ENCODE measurements at regions of chr10 and their contacts with region 1.

Region 1: DNA sequence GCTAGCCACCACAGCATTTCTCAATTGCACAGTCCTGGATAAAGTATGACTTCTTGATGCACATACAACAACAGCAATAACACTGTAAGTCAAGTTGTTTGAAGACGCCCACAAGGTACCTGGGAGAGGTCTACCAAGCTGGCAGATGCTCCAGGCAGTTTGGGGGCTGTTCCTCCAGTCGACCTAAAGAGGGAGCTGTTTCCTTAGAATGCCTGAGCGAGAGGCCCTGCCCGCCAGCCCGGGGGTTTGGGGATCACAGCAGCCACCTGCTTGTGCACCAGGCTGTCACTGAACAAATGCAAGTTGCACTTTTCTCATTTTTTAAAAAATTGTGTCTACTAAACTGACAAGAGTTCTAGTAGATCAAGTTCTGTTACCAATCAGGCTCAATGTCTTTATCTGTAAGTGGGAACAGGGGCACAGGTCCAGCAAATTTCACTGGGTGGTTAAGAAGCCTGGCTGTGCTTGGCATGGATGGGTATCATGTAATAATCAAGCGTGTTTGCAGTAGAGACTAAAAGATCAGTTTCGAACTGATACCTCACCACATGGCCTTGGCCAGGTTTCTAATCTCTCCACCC is 193.8 kb upstream of the ADO start:
- DNase-seq: peak; percentile 85
- H3K4me3 Mint-ChIP-seq: no peak overlapping the region
- H3K27ac Mint-ChIP-seq: no peak overlapping the region
- H3K4me1 Mint-ChIP-seq: peaks cover 37% of the 10 kb centered on the region
- H3K27me3 Mint-ChIP-seq: peaks cover 5% of the 10 kb centered on the region

Region 2: DNA sequence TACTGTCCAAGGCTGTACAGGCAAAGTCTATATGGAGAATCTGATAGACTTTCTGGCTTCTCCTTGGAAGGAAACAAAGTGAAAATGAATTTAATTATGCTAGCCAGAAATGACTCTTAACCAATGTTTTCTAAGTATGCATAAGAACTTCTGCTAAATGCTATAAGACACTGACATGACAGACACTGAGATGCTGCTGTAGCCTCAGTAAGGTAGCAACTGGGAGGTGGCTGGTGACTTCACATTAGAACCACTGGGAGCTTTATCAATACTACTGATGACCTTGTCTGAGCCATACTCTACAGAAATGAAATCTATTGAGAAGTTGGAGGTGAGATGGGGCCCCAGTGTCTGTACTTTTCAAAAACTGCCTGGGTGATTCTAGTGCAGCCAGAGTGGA is 47.9 kb before region 1 on chr10:
- CTCF ChIA-PET with region 1: no interaction called
- POLR2A ChIA-PET with region 1: no interaction called
- intact Hi-C with region 1: no loop called
- DNase-seq: no peak
- H3K4me3 Mint-ChIP-seq: no peak overlapping the region
- H3K27ac Mint-ChIP-seq: no peak overlapping the region
- H3K4me1 Mint-ChIP-seq: peaks cover 2% of the 10 kb centered on the region
- H3K27me3 Mint-ChIP-seq: peaks cover 2% of the 10 kb centered on the region

Region 3: GRCh38 chr10:62637249-62638061 is 26.7 kb after region 1 on chr10:
- CTCF ChIA-PET with region 1: interaction called, 9 read pairs
- POLR2A ChIA-PET with region 1: interaction called, 10 read pairs
- intact Hi-C with region 1: loop called (anchors 1 kb)
- DNase-seq: peak; percentile 84
- H3K4me3 Mint-ChIP-seq: no peak overlapping the region
- H3K27ac Mint-ChIP-seq: no peak overlapping the region
- H3K4me1 Mint-ChIP-seq: peaks cover 26% of the 10 kb centered on the region
- H3K27me3 Mint-ChIP-seq: no peaks in the 10 kb centered on the region

Region 4: DNA sequence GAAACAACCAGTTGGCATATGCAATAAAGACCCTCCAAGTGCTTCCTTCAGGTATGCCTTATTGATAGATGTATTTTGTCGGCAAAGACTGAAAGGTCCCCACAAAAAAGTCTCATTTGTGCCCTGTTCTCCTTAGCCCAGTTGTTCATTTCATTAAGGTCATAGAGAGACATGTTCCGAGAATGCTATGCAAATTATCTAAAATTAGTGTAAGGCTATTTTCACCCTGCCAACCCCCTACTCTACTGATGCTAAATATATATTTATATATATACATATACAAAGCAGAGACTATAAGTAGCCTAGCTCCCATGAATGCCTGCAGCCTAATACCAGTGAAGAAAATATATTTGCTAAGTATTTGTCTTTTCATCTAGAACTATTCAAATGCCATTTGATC is 97.1 kb after region 1 on chr10:
- CTCF ChIA-PET with region 1: interaction called, 10 read pairs
- POLR2A ChIA-PET with region 1: no interaction called
- intact Hi-C with region 1: no loop called
- DNase-seq: no peak
- H3K4me3 Mint-ChIP-seq: no peak overlapping the region
- H3K27ac Mint-ChIP-seq: no peak overlapping the region
- H3K4me1 Mint-ChIP-seq: peaks cover 3% of the 10 kb centered on the region
- H3K27me3 Mint-ChIP-seq: peaks cover 4% of the 10 kb centered on the region

Region 5: DNA sequence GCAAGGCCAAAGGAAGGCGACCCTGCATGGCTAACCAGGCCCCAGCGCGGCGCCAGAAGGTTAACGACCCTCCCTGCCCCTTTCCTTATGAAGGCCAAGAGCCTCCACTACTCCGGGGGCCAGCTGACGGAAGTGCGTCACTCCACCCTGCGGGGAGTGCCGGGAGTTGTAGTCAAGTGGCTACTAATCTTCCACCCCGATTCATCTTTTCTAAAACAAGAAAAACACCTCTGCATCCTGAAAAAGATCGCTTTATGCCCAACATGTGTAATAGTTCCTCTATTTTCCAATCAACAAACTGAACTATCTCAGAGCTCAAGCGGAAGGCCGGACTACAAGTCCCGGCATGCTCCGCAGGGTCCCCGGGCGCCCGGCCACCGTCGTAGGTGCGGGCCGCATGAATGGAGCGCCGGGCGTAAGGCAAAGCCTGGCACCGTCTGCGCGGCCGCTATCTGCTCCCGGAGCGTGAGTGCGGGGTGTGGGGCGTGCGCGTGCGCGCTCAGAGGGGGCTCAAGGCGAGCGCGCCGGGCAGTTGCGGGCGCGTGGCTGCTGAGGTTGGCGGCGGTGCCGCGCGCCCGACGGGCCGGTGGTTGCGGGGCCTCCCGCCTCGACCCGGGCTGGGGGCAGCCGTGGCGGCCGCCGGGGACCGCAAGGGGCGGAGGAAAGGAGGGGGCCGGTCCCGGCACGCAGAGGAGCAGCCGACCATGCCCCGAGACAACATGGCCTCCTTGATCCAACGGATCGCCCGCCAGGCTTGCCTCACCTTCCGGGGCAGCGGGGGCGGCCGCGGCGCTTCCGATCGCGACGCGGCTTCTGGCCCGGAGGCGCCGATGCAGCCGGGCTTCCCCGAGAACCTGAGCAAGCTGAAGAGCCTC is 193.9 kb after region 1 on chr10 and contains the start of gene ADO:
- CTCF ChIA-PET with region 1: interaction called, 43 read pairs
- POLR2A ChIA-PET with region 1: interaction called, 3 read pairs
- intact Hi-C with region 1: no loop called
- DNase-seq: peak; percentile 82
- H3K4me3 Mint-ChIP-seq: peak within 1 kb of the TSS; percentile 97
- H3K27ac Mint-ChIP-seq: peak within 1 kb of the TSS; percentile 100
- H3K4me1 Mint-ChIP-seq: peaks cover 43% of the 10 kb centered on the region
- H3K27me3 Mint-ChIP-seq: no peaks in the 10 kb centered on the region
- total RNA-seq, gene ADO: 26.7 to 27.1 TPM

Region 6: DNA sequence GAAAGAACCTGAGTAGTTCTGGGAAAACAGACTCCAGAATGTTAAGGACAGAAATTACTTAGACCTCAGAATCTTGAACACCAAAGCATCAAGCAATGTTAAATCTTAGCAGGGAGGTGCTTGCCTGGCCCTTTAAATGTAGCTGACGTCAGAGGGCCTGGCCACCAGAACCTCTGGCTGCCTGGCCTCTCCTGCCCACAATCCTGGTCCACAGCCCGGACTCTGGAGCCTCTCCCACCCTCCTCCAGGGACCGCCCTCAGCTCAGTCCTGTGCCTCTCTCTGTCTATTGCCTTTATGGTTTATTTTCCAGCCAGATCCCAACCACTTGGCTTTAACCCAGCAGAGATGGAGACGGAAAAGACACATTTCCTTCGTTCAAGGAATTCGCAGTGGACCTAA is 247.6 kb after region 1 on chr10:
- CTCF ChIA-PET with region 1: interaction called, 3 read pairs
- POLR2A ChIA-PET with region 1: interaction called, 3 read pairs
- intact Hi-C with region 1: loop called (anchors 1 kb)
- DNase-seq: no peak
- H3K4me3 Mint-ChIP-seq: no peak overlapping the region
- H3K27ac Mint-ChIP-seq: no peak overlapping the region
- H3K4me1 Mint-ChIP-seq: peaks cover 61% of the 10 kb centered on the region
- H3K27me3 Mint-ChIP-seq: peaks cover 9% of the 10 kb centered on the region

Region 7: DNA sequence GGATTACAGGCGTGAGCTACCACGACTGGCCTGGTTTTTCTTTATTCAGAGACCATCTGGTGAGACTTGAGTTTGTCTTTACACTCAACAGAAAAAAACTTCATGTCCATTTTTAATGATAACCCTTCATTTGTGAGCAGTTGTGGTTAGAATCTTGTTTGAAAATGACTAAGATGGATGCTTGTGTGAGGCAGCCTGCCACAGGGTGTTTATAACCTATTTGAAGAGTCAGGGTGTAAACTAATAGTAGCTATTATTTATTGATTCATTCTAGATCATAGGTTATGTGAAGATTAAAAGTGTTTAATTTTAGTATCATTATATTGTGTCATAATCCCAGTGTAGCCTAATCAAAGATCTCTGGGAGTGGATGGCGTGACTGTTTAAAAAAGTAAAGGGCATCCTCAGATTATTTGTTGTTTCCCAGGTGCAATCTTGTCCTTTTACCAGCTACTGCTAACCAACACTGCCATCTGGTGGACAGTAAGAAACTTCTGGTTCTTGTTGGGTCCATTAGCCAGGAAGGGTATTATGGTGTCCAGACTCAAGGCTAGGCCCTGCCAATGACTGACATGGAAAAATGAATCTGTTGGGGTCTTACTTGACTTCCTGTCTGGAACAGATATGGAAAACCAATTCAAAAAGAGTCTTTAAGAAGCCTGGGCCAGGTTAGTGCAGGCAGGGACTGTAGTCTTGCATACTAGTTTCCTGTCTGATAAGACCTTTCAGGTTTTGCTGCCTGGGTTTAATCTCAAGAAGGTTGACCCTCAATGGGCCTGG is 547.3 kb after region 1 on chr10:
- CTCF ChIA-PET with region 1: interaction called, 37 read pairs
- POLR2A ChIA-PET with region 1: no interaction called
- intact Hi-C with region 1: loop called (anchors 1 kb)
- DNase-seq: peak; percentile 41
- H3K4me3 Mint-ChIP-seq: no peak overlapping the region
- H3K27ac Mint-ChIP-seq: no peak overlapping the region
- H3K4me1 Mint-ChIP-seq: peaks cover 7% of the 10 kb centered on the region
- H3K27me3 Mint-ChIP-seq: no peaks in the 10 kb centered on the region